Activated CD4-positive, alpha-beta memory T cell treated with anti-CD3 and anti-CD28 coated beads for 36 hours (primary cell): ENCODE measurements at regions of chr9 and their contacts with region 1.

Region 1: DNA sequence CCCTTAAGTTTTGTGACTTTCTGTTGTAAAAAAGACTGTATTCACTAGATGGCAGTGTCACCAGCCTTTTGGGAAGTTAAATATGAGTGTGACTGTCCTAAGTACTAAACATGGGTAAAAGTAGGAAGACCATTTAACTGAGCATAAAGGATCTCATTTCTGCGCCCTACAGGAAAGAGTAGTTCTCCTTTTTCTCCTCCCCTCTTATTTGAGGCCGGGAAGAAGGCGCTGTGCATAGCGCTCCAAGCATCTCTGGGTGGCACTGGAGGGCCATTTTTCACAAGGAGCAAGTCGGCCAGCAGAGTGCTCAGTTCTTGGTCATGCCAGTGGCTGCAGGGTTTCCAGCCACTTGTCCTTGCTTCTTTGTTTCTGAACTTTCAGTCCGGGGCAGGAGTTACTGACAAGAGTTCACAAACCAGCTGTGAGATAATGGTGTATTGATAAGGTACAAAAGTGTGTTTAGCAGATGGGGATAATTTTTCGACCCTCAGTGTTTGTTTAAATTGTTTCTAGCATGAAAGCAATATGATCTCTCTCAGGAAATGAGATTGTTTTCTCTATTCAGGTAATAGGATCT is 227.6 kb upstream of the DMRT1 start:
- DNase-seq: peak; percentile 48
- H3K4me3 Mint-ChIP-seq: no peak overlapping the region
- H3K27ac Mint-ChIP-seq: no peak overlapping the region
- H3K4me1 Mint-ChIP-seq: no peaks in the 10 kb centered on the region
- H3K27me3 Mint-ChIP-seq: no peaks in the 10 kb centered on the region

Region 2: GRCh38 chr9:638152-638551 is 24.3 kb after region 1 on chr9:
- CTCF ChIA-PET with region 1: interaction called, 3 read pairs
- POLR2A ChIA-PET with region 1: no interaction called
- intact Hi-C with region 1: loop called (anchors 1 kb)
- DNase-seq: peak; percentile 16
- H3K4me3 Mint-ChIP-seq: no peak overlapping the region
- H3K27ac Mint-ChIP-seq: no peak overlapping the region
- H3K4me1 Mint-ChIP-seq: peaks cover 29% of the 10 kb centered on the region
- H3K27me3 Mint-ChIP-seq: no peaks in the 10 kb centered on the region

Region 3: DNA sequence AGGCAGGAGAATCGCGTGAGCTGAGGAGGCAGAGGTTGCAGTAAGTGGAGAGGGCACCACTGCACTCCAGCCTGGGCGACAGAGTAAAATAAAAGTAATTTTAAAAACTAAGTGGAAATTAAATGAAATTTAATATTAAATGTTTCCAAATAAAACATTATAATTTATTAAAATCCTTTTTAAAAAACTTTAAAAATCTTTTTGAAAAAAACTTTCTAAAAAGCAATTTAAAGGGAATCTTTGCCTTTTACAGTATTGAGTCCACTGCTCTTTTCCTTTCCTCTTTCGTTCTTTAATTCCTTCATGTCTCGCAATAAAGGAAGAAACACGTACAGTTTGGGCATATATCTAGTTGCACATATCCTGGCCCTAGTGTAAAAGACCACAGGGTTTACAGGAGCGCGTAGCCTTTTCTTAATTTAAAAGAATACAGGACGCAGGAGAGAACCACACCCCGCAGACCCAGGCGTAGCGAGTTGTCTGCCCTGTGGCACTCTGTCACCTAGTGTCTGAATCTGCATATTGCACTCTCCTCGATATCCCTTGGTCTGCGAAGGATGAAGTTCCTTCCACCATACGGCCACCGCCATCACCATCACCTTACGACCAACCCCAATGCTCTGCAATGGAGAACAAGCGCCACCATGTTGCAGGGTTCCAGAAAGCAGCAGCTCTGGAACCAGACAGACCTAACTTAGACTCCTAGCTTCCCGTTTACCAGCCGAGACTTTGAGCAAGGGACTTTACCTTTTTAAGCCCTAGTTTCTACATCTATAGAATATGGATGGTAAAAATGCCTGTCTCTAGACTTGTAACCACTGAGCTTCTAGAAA is 150.0 kb after region 1 on chr9:
- CTCF ChIA-PET with region 1: interaction called, 5 read pairs
- POLR2A ChIA-PET with region 1: no interaction called
- intact Hi-C with region 1: loop called (anchors 1 kb)
- DNase-seq: peak; percentile 58
- H3K4me3 Mint-ChIP-seq: peak overlapping the region; percentile 3
- H3K27ac Mint-ChIP-seq: no peak overlapping the region
- H3K4me1 Mint-ChIP-seq: peaks cover 2% of the 10 kb centered on the region
- H3K27me3 Mint-ChIP-seq: peaks cover 22% of the 10 kb centered on the region

Region 4: DNA sequence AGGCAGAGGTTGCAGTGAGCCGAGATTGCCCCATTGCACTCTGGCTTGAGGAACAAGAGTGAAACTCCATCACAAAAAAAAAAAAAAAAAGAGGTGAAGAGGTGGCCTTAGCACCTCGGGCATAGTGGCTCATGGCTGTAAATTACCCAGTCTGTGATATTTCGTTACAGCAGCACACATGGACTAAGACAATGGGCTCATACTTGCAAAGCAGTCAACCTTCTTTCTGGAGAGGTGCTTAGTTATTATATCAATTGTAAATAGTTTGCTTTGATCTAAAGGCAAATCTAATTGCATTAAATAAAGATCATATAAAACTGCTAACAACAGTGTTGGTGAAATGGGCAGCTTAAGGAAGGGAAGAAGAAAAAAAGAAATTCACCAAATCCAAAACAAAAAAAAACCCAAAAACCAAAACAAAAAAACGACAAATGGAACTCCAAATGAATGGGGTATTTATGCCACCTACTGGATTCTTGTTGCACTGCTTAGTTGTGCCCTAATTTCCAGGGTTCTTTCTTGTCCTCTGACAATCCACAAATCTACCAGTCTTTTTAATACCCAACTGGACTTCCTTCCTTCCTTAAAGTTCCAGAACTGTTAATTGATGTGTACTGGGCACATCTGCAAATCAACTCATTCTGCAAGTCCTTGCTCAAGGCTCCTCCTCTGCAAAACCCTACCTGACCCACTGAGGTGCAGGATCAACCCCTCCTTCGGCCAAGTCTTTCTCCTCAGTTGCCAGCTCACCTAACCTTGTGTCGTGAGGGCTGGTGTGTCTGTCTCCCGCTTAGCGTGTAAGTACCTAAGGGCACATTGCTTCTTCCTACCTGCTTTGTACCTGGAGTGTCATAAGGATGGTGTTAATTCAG is 192.7 kb after region 1 on chr9:
- CTCF ChIA-PET with region 1: interaction called, 9 read pairs
- POLR2A ChIA-PET with region 1: no interaction called
- intact Hi-C with region 1: loop called (anchors 1 kb)
- DNase-seq: no peak
- H3K4me3 Mint-ChIP-seq: no peak overlapping the region
- H3K27ac Mint-ChIP-seq: no peak overlapping the region
- H3K4me1 Mint-ChIP-seq: no peaks in the 10 kb centered on the region
- H3K27me3 Mint-ChIP-seq: peaks cover 7% of the 10 kb centered on the region

Region 5: DNA sequence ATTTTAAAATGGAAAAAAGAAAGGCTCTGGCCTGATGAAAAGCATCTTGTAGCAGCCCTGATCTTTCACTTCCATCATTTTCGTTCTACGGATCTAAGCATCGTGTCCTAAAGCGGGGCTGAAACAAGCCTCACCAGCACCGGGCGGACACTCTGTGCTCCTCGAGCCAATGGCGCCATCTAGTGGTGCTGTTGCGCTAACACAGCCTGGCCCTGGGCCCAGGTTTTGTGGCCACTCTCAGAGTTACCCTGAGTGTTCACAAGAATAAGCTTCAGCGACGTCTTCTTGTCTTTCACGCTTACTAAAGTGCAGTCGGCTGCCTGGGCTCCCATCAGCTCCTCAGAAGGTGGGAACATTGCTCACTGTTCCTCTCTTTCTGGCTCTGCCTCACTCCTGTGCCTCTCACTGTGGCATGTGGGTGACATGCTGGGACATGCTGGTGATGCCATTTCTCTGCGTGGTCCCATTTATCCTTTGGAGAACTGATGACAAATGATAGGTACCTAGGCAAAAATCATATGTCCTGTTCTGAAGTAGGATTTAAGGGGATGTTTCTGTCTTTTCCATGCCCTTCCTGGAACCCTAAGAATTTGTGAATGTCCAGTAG is 395.3 kb after region 1 on chr9:
- CTCF ChIA-PET with region 1: interaction called, 6 read pairs
- POLR2A ChIA-PET with region 1: no interaction called
- intact Hi-C with region 1: loop called (anchors 5 kb)
- DNase-seq: peak; percentile 86
- H3K4me3 Mint-ChIP-seq: no peak overlapping the region
- H3K27ac Mint-ChIP-seq: no peak overlapping the region
- H3K4me1 Mint-ChIP-seq: peaks cover 3% of the 10 kb centered on the region
- H3K27me3 Mint-ChIP-seq: peaks cover 13% of the 10 kb centered on the region